ENCODE measurements at regions of chr14 and their contacts with region 1.

Region 1: DNA sequence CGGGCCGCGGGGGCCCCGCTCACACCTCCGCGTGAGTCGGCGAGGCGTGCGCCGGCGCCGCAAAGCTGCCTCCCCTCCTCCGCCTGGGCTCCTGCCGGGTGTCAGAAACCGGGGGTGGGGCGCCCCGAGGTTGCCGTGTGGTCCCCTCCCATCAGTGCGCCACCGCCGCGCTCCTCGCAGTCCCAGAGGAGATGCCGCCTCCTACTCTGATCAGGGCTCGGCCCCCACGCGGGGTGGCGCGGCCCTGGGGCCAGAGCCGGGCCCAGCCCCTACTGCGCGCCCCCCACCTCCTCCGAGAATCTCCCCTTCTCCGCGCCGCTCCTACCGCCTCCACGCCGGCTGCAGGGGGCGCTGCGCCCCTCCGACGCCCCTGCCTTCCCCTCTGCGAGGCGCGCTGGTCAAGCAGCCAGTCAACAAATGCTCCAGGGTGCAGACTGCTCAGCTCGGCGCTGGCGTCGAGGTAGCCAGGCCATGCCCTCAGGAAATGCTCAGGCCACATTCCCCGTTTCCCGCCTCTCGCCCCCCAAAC is 467 bp upstream of the JAG2 start:
- DNase-seq: peak; percentile 71
- ATAC-seq: peak; percentile 48
- H3K4me3 Mint-ChIP-seq: peak overlapping the region; percentile 63
- H3K27ac Mint-ChIP-seq: no peak overlapping the region
- H3K4me1 Mint-ChIP-seq: peaks cover 6% of the 10 kb centered on the region
- H3K27me3 Mint-ChIP-seq: peaks cover 17% of the 10 kb centered on the region

Region 2: GRCh38 chr14:105107781-105108515 is 61.1 kb before region 1 on chr14:
- POLR2A ChIA-PET with region 1: no interaction called
- DNase-seq: no peak
- ATAC-seq: no peak
- H3K4me3 Mint-ChIP-seq: no peak overlapping the region
- H3K27ac Mint-ChIP-seq: no peak overlapping the region
- H3K4me1 Mint-ChIP-seq: peaks cover 3% of the 10 kb centered on the region
- H3K27me3 Mint-ChIP-seq: peaks cover 37% of the 10 kb centered on the region

Region 3: DNA sequence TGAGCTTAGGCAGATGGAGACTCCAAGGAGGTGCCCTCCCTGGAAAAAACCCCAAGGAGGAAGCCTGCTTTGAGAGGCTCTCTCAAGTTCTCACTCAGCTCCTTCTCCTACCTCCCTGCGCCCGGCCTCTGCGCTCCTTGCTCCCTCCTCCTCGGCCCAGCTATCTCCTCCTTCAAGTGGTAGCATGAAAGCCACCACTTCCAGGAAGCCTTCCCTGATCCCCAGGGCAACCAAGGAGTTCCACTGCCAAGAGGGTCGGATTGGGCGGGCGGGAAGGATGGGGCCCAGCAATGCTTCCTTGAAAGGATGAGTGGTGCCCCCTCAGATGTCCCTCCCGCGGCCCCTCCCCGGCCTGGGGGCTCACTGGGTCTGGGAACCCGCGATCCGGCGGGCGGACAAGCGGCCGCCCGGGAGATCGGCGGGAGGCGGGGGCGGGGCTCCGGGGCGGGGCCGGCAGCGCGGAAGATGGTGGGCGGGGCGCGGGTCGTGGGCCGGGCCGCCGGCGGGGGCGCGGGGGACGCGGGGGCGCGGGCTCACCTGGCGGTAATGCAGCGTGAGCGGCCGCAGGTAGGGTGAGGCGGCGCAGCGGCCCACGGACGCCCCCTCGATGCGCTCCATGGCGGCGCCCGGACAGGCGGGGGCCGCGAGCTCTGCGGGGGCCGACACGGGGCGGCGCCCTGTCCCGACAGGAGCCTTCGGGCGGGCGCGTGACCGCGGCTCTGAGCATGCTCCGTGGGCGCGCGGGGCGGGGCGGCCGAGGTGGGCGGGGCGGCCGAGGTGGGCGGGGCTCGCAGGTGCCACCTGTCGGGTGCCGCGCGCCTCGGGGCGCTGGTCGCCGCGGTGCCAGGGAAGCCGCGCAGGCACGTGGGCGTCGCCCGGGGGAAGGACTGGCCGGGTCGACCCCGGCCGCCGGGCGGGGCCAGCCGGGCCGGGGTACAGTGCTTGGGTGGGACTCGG is 11.8 kb after region 1 on chr14 and contains the start of gene NUDT14:
- POLR2A ChIA-PET with region 1: interaction called, 13 read pairs
- DNase-seq: peak; percentile 89
- ATAC-seq: peak; percentile 87
- H3K4me3 Mint-ChIP-seq: peak within 1 kb of the TSS; percentile 77
- H3K27ac Mint-ChIP-seq: peak within 1 kb of the TSS; percentile 25
- H3K4me1 Mint-ChIP-seq: peaks cover 22% of the 10 kb centered on the region
- H3K27me3 Mint-ChIP-seq: no peaks in the 10 kb centered on the region
- total RNA-seq, gene NUDT14: 23.3 to 28.0 TPM

Measured in activated naive CD8-positive, alpha-beta T cell treated with anti-CD3 and anti-CD28 coated beads, Interleukin-2, amount 10 ng/mL, durations not matched to agents 7 days and 5 days (primary cell).